Motor neuron (in vitro differentiated cells): ENCODE measurements at regions of chr9 and their contacts with region 1.

Region 1: DNA sequence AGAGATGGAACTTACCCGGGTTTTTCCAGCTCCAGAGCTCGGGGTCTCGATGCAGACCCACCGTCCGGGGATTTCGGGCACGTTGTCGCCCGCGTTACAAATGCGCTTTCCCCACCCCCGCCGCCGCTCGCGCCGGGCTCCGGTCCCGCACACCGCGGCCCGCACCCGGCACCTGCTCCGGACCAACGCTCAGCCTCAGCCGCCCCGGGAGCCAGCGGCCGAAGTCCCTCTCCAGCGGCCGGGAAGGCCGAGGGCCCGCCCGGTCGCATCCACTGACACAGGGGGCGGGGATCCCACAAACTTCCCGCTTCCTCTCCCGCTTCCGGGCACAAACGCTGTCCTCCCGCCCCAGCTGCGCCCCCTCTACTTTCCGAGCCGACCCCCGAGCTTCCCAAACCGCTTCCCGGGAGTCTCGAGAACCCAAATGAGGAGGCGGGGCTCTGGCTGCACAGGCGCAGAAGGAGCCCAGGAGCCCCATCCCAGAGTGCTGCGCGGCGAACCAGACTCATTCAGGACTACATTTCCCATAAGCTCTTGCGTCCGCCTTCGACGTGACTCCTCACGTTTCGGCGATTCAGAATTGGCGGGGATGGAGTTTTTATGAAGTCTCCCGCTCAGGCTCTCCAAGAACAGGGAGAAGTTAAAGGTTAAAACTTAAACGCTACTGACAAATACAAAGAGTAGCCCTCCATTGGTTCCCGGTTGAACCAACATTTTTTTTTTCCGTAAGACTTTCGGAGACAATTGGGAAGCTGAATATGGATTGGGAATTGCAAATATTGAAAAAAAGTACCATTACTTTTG is at the start of gene ZNF782:
- ATAC-seq: peak; percentile 82 to 96 (median 94)
- H3K4me3 ChIP-seq: peak within 1 kb of the TSS; percentile 51 to 98 (median 83)
- H3K27ac ChIP-seq: peak within 1 kb of the TSS in 1 of 2 donors; percentile 53
- H3K4me1 ChIP-seq: peaks cover 10 to 11% of the 10 kb centered on the region in 2 donors
- total RNA-seq, gene ZNF782: 3.1 to 14.6 (median 10.4) TPM

Region 2: DNA sequence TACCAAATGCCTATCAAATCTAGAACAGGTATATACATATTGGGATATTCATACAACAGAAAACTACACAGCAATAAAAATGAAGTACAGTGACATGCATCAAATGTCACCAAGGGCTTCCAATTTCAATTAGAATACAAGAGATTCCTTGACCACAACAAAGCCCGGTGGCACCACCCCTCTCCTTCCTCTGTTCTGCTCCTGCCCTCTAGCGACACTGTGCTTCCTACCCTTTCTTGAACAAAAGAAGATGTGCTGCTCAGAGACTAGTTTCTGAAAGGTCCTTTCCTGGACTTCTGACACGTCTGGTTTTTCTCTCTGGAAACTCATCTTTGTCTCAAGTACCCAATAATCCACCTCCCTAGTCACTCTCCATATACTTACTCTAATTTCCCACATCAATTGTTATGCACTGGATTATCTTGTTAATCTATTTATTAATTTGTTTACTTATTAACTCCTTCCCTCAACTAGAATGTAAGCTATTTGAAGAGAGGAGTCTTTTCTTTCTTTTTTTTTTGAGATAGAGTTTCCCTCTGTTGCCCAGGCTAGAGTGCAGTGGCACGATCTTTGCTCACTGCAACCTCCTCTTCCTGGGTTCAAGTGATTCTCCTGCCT is 255.0 kb after region 1 on chr9:
- in situ Hi-C with region 1: loop called in 1 of 9 experiments (anchors 25 kb)
- ATAC-seq: peak in 4 of 8 experiments; percentile 34 to 80 (median 67)
- H3K4me3 ChIP-seq: no peak overlapping the region
- H3K27ac ChIP-seq: no peak overlapping the region
- H3K4me1 ChIP-seq: no peaks in the 10 kb centered on the region

Region 3: DNA sequence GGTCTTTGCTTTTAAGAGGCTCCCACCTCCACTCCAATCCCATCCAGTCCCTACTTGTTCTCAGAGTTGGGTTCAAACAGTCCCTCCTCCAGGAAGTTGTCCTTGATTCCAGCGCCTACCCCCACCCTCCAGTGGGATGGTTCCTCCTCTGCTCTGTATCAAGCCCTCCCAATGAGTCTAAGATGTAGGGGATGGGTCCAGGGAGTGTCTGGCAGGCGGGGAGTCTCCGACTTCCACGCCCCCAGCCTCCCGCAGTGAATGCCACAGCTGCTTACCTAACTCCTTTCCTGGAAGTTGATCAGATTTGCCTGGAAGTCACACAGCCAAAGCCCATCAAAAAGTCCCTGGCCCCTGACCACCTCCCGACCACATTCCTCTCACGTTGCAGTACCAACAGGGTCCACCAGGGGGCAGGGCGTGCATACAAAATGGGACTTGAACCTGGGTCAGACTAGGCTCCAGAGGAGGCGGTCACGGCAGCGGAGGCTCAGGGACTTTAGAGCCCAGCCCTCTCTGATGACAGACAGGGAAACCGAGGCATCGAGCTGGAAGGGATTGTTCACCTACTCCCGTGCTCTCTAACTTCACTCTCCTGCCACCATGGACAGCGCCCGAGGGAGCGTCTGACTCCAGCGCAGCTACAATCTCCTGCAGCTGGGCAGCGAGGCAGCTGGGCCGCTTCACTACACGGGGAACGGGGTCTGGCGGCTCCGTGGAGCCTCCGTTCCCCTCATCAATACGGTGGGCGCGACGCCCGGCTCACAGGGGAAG is 532.6 kb after region 1 on chr9:
- in situ Hi-C with region 1: loop called in 2 of 9 experiments (anchors 25 kb)
- ATAC-seq: peak; percentile 45 to 88 (median 66)
- H3K4me3 ChIP-seq: no peak overlapping the region
- H3K27ac ChIP-seq: no peak overlapping the region
- H3K4me1 ChIP-seq: peaks cover 3 to 9% of the 10 kb centered on the region in 2 donors

Region 4: DNA sequence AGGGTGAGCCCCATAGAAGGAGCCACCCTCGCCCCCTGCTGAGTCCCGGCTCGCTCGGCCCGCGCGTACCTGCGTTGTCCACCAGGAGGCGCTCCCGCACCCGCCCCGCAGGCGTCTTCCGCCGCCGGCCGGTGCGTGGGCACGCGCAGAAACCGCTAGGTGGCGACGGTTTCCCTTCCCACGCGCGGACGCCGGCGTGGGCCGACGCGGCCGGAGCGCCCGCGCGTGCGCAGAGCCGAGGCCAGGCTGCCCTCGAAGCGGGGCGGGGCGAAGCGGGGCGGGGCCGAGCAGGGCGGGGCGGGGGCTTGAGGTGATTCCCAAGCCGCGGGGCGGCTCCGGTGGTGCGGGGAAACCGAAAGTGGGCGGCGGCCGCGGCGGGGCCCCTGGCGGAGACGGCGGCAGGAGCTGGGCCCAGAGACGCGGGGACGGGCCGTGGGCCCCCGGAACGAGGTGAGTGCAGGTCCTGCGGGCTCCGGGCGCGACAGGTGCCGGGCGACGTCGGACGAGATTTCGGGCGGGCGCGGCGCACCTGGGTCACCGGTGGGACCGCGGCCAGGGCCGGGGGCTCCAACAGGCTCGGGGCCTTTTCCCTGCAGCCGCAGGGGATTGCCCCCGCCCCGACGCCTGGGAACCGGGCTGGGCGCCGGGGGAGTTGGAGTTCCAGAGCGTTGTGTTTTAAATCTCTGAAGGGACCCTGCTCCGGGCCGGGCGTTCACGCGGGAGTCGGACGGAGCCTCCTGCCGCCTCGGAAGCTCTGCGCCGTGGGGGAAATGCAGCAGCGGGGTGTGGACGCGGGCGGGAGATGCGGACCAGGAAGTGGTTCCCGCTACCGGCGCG is 557.7 kb after region 1 on chr9 and contains the start of gene TDRD7:
- in situ Hi-C with region 1: loop called in 1 of 9 experiments (anchors 25 kb)
- ATAC-seq: peak; percentile 84 to 95 (median 91)
- H3K4me3 ChIP-seq: peak within 1 kb of the TSS; percentile 69 to 85 (median 73)
- H3K27ac ChIP-seq: no peak within 1 kb of the TSS
- H3K4me1 ChIP-seq: peaks cover 0 to 3% of the 10 kb centered on the region in 2 donors
- total RNA-seq, gene TDRD7: 2.0 to 55.6 (median 4.3) TPM

Region 5: GRCh38 chr9:97615439-97616072 is 761.3 kb after region 1 on chr9:
- in situ Hi-C with region 1: loop called in 3 of 9 experiments (anchors 25 kb)
- ATAC-seq: peak in 6 of 8 experiments; percentile 44 to 79 (median 64)
- H3K4me3 ChIP-seq: no peak overlapping the region
- H3K27ac ChIP-seq: no peak overlapping the region
- H3K4me1 ChIP-seq: no peaks in the 10 kb centered on the region